CD8-positive, alpha-beta T cell (primary cell): ENCODE measurements at regions of chr5 and their contacts with region 1.

Region 1: GRCh38 chr5:35698047-35698808 is 80.6 kb downstream of the SPEF2 start:
- DNase-seq: no peak
- ATAC-seq: no peak
- H3K4me3 ChIP-seq: no peak overlapping the region
- H3K4me3 Mint-ChIP-seq: no peak overlapping the region
- H3K27ac ChIP-seq: no peak overlapping the region
- H3K27ac Mint-ChIP-seq: no peak overlapping the region
- H3K4me1 ChIP-seq: no peaks in the 10 kb centered on the region
- H3K4me1 Mint-ChIP-seq: no peaks in the 10 kb centered on the region
- H3K27me3 ChIP-seq: no peaks in the 10 kb centered on the region
- H3K27me3 Mint-ChIP-seq: no peaks in the 10 kb centered on the region
- CTCF ChIP-seq: no peak

Region 2: DNA sequence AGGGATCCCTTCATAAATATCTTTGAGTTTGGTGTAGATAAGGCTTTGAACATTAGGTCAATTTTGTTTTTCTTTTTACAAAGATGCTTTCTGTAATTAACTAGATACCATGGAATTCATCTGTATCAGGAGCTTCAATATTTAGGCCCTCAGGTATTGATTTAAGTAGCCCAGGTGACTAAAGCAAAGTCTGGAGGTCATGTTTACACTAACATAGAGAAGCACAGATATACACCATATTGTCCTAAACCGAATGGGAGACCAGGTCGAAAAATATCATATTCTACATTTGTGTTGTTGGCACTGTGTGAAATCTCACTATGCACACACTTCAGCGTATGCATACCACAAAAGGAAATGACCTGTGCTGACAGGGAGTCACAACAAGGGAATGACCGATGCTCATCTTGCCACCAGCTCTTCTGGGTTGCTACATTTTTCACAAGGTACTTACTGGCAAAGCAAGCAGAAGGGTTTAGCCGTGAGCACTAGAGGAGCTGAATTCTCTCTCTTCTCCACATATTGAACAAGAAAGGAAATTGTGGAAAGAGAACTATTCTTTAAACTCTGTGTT is 60.0 kb after region 1 on chr5:
- CTCF ChIA-PET with region 1: no interaction called
- POLR2A ChIA-PET with region 1: no interaction called
- intact Hi-C with region 1: loop called in 1 of 2 experiments (anchors 5 kb)
- DNase-seq: no peak
- ATAC-seq: no peak
- H3K4me3 ChIP-seq: no peak overlapping the region
- H3K4me3 Mint-ChIP-seq: no peak overlapping the region
- H3K27ac ChIP-seq: no peak overlapping the region
- H3K27ac Mint-ChIP-seq: no peak overlapping the region
- H3K4me1 ChIP-seq: peaks cover 18% of the 10 kb centered on the region
- H3K4me1 Mint-ChIP-seq: peaks cover 35% of the 10 kb centered on the region
- H3K27me3 ChIP-seq: no peaks in the 10 kb centered on the region
- H3K27me3 Mint-ChIP-seq: no peaks in the 10 kb centered on the region
- CTCF ChIP-seq: no peak

Region 3: GRCh38 chr5:36060420-36060887 is 362.2 kb after region 1 on chr5:
- CTCF ChIA-PET with region 1: no interaction called
- POLR2A ChIA-PET with region 1: no interaction called
- intact Hi-C with region 1: no loop called
- DNase-seq: no peak
- ATAC-seq: no peak
- H3K4me3 ChIP-seq: no peak overlapping the region
- H3K4me3 Mint-ChIP-seq: no peak overlapping the region
- H3K27ac ChIP-seq: no peak overlapping the region
- H3K27ac Mint-ChIP-seq: no peak overlapping the region
- H3K4me1 ChIP-seq: no peaks in the 10 kb centered on the region
- H3K4me1 Mint-ChIP-seq: no peaks in the 10 kb centered on the region
- H3K27me3 ChIP-seq: peaks cover 0 to 3% of the 10 kb centered on the region in 2 experiments
- H3K27me3 Mint-ChIP-seq: peaks cover 5% of the 10 kb centered on the region
- CTCF ChIP-seq: no peak